Dendritic cell treated with granulocyte-macrophage colony-stimulating factor and Interleukin-4, amounts not matched to agents 40 ng/mL and 50 ng/mL, for 4 days (primary cell): ENCODE measurements at regions of chr5 and their contacts with region 1.

Region 1: DNA sequence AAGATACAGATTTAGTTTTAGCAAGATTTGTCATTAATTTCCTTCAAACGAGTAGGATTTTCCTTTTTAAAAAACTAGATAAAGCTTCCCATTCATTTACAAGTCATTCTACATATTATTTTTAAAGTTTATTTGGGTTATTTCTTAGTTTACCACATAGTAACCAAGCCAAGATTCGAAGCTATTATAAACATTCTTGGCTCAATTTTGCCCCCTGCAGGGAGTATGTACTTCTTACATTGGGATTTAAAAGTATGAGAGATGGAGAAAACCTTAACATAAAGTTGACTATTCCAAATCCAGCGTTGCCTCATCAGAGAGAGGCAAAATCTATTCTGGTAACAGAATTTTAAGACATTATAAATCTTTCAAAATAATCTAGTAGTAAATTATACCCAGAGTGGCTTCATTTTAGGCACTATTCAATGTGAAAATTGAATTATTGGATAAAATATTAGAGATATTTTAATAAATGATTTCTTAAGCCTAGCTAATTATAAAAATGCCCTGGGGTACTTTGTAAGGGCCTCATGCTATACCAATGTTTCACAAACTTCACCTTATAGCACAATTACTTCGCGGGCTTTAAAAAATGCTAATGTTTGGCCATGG is 39.1 kb downstream of the FBN2 start:
- H3K4me3 Mint-ChIP-seq: no peak overlapping the region
- H3K27ac Mint-ChIP-seq: no peak overlapping the region
- H3K4me1 Mint-ChIP-seq: no peaks in the 10 kb centered on the region
- H3K27me3 Mint-ChIP-seq: no peaks in the 10 kb centered on the region

Region 2: DNA sequence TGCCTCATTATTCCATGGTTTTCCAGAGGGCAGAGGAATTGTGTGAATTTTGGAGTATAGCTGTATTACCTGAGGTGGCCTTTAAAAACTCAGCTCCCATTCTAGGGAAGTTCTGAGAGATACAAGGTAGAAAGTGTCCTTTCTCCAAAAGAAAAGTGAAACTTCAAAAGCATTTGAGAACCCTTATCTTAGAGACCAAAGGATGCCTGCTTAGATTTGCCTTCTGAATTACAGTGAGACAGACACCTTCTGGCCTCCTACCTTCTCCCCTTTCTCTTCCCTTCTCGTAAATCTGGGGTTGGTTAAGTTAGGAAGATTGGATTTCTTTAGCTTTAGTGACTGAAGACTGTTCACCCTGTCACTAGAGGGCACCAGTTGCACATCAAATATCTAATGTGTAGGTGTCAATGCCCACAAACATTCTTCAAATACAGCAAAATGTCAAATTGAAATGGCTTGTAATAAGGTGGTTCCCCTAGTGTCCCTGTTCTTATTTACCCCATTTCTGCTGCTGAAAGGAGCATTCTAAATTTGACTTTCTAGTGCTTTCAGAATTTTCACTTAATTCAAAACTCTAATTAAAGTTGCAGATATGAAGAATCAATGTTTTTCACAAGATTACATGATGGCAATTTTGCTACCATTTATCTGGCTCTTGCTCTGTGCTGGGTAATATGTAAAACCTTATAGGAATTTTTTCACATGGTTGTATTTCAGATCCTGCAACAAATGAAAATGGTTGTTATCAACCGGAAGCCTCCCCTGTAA is 934.8 kb before region 1 on chr5:
- intact Hi-C with region 1: loop called (anchors 10 kb)
- H3K4me3 Mint-ChIP-seq: no peak overlapping the region
- H3K27ac Mint-ChIP-seq: no peak overlapping the region
- H3K4me1 Mint-ChIP-seq: peaks cover 11% of the 10 kb centered on the region
- H3K27me3 Mint-ChIP-seq: no peaks in the 10 kb centered on the region

Region 3: GRCh38 chr5:127757576-127757975 is 741.4 kb before region 1 on chr5:
- intact Hi-C with region 1: loop called (anchors 10 kb)
- H3K4me3 Mint-ChIP-seq: no peak overlapping the region
- H3K27ac Mint-ChIP-seq: no peak overlapping the region
- H3K4me1 Mint-ChIP-seq: no peaks in the 10 kb centered on the region
- H3K27me3 Mint-ChIP-seq: no peaks in the 10 kb centered on the region

Region 4: DNA sequence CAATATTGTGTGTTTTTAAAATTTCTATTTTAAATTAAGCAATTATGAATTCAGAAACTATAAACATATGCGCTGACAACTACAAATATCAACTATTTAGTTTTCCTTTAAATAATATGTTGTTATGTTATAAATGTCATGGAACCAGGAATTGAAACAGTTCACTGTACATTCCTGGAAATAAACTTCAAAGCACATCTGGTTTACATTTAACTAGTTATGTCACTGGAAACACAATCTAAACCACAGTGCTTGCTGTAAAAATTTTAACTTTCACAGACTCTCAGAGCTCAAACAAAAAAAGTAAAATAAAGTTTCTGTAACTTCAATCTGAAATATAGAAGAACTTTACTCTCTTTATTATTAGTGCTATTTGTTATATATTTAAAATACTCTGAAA is 140.1 kb before region 1 on chr5:
- intact Hi-C with region 1: no loop called
- H3K4me3 Mint-ChIP-seq: no peak overlapping the region
- H3K27ac Mint-ChIP-seq: no peak overlapping the region
- H3K4me1 Mint-ChIP-seq: no peaks in the 10 kb centered on the region
- H3K27me3 Mint-ChIP-seq: no peaks in the 10 kb centered on the region

Region 5: GRCh38 chr5:128455841-128456401 is 43.0 kb before region 1 on chr5:
- intact Hi-C with region 1: no loop called
- H3K4me3 Mint-ChIP-seq: no peak overlapping the region
- H3K27ac Mint-ChIP-seq: no peak overlapping the region
- H3K4me1 Mint-ChIP-seq: no peaks in the 10 kb centered on the region
- H3K27me3 Mint-ChIP-seq: no peaks in the 10 kb centered on the region

Region 6: DNA sequence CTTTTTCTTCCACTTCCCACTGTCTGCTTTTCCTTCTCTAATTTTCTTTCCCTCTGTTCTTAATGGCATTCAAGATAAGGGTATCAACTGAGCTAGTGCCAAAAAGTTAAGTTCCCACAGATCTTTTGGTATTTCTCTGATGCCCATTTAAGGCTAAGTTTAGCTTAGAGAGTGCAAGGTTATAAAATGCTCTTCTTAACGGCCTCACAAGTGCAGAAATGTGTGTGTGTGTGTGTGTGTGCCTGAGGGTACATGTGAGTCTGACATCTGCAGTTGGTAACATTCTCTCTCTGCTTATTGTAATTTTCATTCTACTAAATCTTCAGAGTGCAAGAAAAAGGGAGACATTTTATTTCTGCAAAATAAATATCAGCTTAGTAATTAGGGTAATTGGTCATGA is 14.9 kb after region 1 on chr5:
- intact Hi-C with region 1: no loop called
- H3K4me3 Mint-ChIP-seq: no peak overlapping the region
- H3K27ac Mint-ChIP-seq: no peak overlapping the region
- H3K4me1 Mint-ChIP-seq: no peaks in the 10 kb centered on the region
- H3K27me3 Mint-ChIP-seq: no peaks in the 10 kb centered on the region